ENCODE measurements at regions of chr2 and their contacts with region 1.

Region 1: DNA sequence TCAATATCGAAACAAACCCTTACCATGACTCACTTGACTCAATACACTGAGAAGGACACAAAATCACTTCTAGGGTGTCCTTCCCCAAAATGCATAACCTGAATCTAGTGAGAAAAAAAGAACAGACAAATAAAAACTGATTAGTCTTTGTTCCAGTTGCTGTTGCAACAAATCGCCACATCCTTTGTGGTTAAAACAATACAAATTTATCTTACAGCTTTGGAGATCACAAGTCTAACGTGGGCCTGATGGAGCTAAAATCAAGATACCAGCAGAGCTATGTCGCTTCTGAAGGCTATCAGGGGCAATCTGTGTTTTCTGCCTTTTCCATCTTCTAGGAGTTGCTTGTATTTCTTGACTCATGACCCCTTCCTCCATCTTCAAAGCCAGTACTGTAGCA is 541.7 kb downstream of the KCNJ3 start:
- ATAC-seq: no peak
- H3K4me3 ChIP-seq: no peak overlapping the region
- H3K27ac ChIP-seq: no peak overlapping the region
- H3K4me1 ChIP-seq: no peaks in the 10 kb centered on the region

Region 2: GRCh38 chr2:154439156-154439555 is 801.0 kb before region 1 on chr2:
- in situ Hi-C with region 1: loop called in 2 of 9 experiments (anchors 25 kb)
- ATAC-seq: peak in 2 of 8 experiments; percentile 23 to 39
- H3K4me3 ChIP-seq: no peak overlapping the region
- H3K27ac ChIP-seq: no peak overlapping the region
- H3K4me1 ChIP-seq: no peaks in the 10 kb centered on the region

Region 3: DNA sequence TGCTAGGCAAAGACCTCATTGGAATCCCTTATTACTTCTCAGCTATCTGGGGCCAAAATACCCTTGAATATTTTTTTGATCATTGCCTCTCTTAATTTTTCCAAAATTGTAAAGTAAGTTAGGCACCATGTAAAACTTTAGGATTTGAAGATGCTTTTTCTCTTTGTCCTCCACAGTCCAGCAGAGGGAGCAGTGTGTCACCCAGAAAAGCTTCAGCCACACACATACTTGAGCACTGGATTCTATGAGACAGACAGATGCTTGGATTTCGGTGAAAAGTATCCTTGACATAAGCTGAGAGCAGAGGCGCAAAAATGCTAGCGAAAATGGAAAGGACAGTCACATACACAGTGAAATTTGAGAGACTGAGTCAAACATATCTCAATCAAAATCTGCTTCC is 616.4 kb before region 1 on chr2:
- in situ Hi-C with region 1: loop called in 3 of 9 experiments (anchors 25 kb)
- ATAC-seq: peak in 7 of 8 experiments; percentile 49 to 72 (median 68)
- H3K4me3 ChIP-seq: no peak overlapping the region
- H3K27ac ChIP-seq: no peak overlapping the region
- H3K4me1 ChIP-seq: no peaks in the 10 kb centered on the region

Region 4: GRCh38 chr2:154637456-154637855 is 602.7 kb before region 1 on chr2:
- in situ Hi-C with region 1: loop called in 1 of 9 experiments (anchors 25 kb)
- ATAC-seq: no peak
- H3K4me3 ChIP-seq: no peak overlapping the region
- H3K27ac ChIP-seq: no peak overlapping the region
- H3K4me1 ChIP-seq: no peaks in the 10 kb centered on the region

Region 5: GRCh38 chr2:154758871-154759270 is 481.3 kb before region 1 on chr2:
- in situ Hi-C with region 1: loop called in 1 of 9 experiments (anchors 25 kb)
- ATAC-seq: peak in 1 of 8 experiments; percentile 44
- H3K4me3 ChIP-seq: no peak overlapping the region
- H3K27ac ChIP-seq: no peak overlapping the region
- H3K4me1 ChIP-seq: no peaks in the 10 kb centered on the region

Region 6: GRCh38 chr2:155157071-155157470 is 83.1 kb before region 1 on chr2:
- in situ Hi-C with region 1: no loop called
- ATAC-seq: no peak
- H3K4me3 ChIP-seq: no peak overlapping the region
- H3K27ac ChIP-seq: no peak overlapping the region
- H3K4me1 ChIP-seq: no peaks in the 10 kb centered on the region

Measured in motor neuron (in vitro differentiated cells).